Endothelial cell of umbilical vein (primary cell): ENCODE measurements at regions of chr1 and their contacts with region 1.

Region 1: GRCh38 chr1:23539698-23540266 is 8.7 kb upstream of the E2F2 start:
- DNase-seq: peak; percentile 93
- H3K4me3 ChIP-seq: no peak overlapping the region
- H3K27ac ChIP-seq: no peak overlapping the region
- H3K4me1 ChIP-seq: peaks cover 8% of the 10 kb centered on the region
- H3K27me3 ChIP-seq: no peaks in the 10 kb centered on the region
- CTCF ChIP-seq: peak; percentile 93
- POLR2A ChIP-seq: no peak

Region 2: GRCh38 chr1:22976461-22977243 is 563.1 kb before region 1 on chr1:
- CTCF ChIA-PET with region 1: interaction called, 11 read pairs
- POLR2A ChIA-PET with region 1: no interaction called
- dilution Hi-C with region 1: no loop called
- intact Hi-C with region 1: loop called (anchors 1 kb)
- DNase-seq: peak; percentile 83
- H3K4me3 ChIP-seq: no peak overlapping the region
- H3K27ac ChIP-seq: no peak overlapping the region
- H3K4me1 ChIP-seq: peaks cover 12% of the 10 kb centered on the region
- H3K27me3 ChIP-seq: no peaks in the 10 kb centered on the region
- CTCF ChIP-seq: peak; percentile 81 to 87
- POLR2A ChIP-seq: no peak

Region 3: DNA sequence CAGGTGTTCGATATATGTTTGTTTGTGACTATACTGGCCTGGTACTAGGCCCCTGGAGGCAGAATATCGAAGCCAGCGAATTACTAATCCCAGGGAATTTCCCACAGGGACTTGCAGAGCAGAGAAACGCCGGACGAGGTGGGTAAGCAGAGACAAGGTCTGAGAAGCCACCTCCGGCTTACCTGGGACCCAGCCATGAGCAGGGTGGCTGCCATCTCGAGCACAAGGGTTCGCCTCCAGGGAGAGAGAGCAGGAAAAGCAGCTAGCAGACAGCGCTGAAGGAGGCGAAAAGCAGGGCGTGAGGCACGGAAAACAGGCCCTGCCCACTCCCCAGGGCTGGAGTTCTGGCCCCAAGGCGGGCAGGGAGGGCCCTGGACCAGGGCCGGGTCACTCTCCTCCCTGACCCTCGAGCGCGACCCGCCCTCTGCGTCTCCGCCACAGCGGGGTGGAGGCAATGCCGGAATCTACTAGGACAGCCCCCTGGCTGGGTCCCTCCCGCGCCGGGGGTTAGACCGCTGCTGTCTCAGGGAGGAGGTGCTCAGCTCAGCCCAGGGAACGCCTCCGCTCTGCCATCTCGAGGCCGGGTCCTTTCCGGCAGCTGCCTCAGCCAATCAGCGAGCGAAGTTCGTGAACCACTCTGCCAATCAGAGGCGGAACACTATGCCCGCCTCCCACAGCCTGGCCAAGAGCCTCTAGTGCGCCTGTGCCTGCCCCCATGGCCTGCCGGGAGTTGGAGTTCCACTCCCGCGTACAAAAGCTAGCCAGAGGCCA is 171.8 kb before region 1 on chr1:
- CTCF ChIA-PET with region 1: interaction called, 6 read pairs
- POLR2A ChIA-PET with region 1: no interaction called
- dilution Hi-C with region 1: no loop called
- intact Hi-C with region 1: loop called (anchors 1 kb)
- DNase-seq: peak; percentile 99
- H3K4me3 ChIP-seq: peak overlapping the region; percentile 47 to 93 (median 70)
- H3K27ac ChIP-seq: peak overlapping the region; percentile 82
- H3K4me1 ChIP-seq: peaks cover 32% of the 10 kb centered on the region
- H3K27me3 ChIP-seq: no peaks in the 10 kb centered on the region
- CTCF ChIP-seq: no peak
- POLR2A ChIP-seq: no peak

Region 4: DNA sequence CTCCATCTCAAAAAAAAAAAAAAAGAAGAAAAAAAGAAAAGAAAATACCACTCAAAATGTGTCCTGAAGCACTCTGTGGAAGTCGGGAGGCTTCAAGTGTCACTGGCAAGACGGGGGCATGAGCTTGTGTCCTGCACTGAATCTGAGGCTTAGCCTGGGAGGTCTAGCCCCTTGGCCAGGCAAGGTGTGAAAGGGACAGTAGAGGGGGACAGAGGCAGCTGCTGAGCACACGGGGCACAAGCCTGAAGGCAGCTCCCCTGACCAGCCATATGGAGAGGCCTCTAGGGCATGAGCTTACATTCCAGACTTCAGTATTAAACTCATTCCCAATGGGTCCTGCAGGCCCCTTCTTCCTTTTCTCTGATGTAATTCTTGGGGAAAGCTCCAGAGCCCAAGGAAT is 32.3 kb before region 1 on chr1:
- CTCF ChIA-PET with region 1: interaction called, 192 read pairs
- POLR2A ChIA-PET with region 1: no interaction called
- dilution Hi-C with region 1: no loop called
- intact Hi-C with region 1: no loop called
- DNase-seq: no peak
- H3K4me3 ChIP-seq: no peak overlapping the region
- H3K27ac ChIP-seq: no peak overlapping the region
- H3K4me1 ChIP-seq: no peaks in the 10 kb centered on the region
- H3K27me3 ChIP-seq: no peaks in the 10 kb centered on the region
- CTCF ChIP-seq: no peak
- POLR2A ChIP-seq: no peak

Region 5: DNA sequence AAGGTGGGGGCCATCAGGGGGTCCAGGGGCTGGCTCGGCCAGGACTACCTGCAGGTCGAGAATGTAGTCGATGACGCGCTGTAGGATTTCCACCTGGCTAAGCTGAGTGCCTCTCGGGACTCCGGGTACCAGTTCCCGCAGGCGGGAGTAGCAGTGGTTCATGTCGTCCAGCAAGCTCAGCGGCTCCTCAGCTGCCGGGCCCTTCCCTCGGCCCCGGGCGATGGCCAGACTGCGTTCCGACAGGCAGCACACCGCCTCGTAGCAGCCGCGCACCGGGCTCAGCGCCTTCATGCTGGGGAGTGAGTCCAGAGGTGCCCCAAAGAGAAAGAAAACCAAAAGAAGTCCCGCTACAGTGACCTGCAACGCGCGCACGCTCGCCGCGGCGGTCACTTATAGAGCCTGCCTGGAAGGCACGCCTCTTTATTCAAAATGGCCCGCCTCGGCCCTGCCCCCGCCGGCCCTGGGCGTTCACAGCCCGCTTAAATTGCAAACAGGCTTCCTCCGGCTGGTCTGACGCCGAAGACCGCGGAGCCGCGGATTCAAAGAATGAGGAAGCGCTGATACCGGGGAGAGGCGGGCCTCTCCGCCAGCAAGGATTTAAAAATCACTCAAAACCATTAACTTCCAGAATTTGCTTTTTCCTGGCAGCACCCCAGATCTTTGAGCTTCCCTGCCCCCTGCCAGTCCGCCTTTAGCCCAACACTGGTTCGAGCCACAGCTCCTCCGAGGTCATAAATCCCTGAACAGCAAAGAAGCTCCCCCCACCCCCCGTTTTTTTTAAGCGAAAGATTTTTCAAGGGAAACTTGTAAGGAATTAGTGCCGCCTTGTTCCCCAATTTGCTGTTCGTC is 19.6 kb after region 1 on chr1 and contains the start of gene ID3:
- CTCF ChIA-PET with region 1: interaction called, 21 read pairs
- POLR2A ChIA-PET with region 1: interaction called, 4 read pairs
- dilution Hi-C with region 1: no loop called
- intact Hi-C with region 1: no loop called
- DNase-seq: peak; percentile 98
- H3K4me3 ChIP-seq: peak within 1 kb of the TSS; percentile 69 to 94 (median 89)
- H3K27ac ChIP-seq: peak within 1 kb of the TSS; percentile 99
- H3K4me1 ChIP-seq: peaks cover 56% of the 10 kb centered on the region
- H3K27me3 ChIP-seq: no peaks in the 10 kb centered on the region
- CTCF ChIP-seq: no peak
- POLR2A ChIP-seq: peak; percentile 100
- total RNA-seq, gene ID3: 277 and 310 TPM in 2 replicates

Region 6: DNA sequence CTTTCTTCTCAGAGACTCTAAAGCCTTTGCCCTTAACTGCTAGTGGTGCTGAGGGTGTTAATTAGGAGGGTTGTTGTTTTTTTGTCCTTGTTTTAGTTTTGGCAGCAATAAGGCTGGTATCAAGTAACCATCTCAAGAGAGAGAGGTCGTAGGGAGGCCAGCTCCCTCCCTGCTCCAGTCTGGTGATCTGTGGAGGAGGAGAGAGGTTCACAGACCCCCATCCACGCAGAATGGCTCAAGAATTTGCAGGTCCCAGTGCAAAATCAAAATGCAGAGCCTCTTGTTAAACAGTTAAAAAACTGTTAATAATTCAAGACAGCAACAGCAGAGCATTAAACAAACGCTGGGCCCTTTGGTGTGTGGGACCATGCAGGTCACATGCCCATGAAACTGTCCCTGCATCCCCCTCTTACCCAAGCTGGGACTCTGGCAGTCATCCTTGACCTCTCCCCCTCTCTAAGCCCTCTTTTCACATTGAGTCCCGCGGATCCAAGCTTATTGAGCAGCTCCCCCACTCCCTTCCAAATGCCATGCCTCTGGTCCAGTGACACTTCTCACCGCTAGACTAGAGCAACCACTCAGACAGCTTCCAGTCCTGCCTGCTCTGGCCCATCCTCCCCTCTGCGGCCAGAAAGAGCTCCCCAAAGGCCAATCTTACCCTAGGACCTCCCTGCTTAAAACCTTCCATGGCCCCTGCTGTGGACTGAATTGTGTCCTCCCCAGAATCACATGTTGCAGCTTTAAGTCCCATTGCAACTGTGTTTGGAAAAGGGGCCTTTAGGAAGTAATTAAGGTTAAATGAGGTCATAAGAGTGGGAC is 104.2 kb after region 1 on chr1:
- CTCF ChIA-PET with region 1: interaction called, 1,069 read pairs
- POLR2A ChIA-PET with region 1: interaction called, 3 read pairs
- dilution Hi-C with region 1: no loop called
- intact Hi-C with region 1: no loop called
- DNase-seq: no peak
- H3K4me3 ChIP-seq: no peak overlapping the region
- H3K27ac ChIP-seq: no peak overlapping the region
- H3K4me1 ChIP-seq: no peaks in the 10 kb centered on the region
- H3K27me3 ChIP-seq: peaks cover 6 to 10% of the 10 kb centered on the region in 2 experiments
- CTCF ChIP-seq: no peak
- POLR2A ChIP-seq: no peak

Region 7: GRCh38 chr1:23751050-23751814 is 211.4 kb after region 1 on chr1:
- CTCF ChIA-PET with region 1: interaction called, 3 read pairs
- POLR2A ChIA-PET with region 1: no interaction called
- dilution Hi-C with region 1: no loop called
- intact Hi-C with region 1: loop called (anchors 1 kb)
- DNase-seq: peak; percentile 46
- H3K4me3 ChIP-seq: no peak overlapping the region
- H3K27ac ChIP-seq: no peak overlapping the region
- H3K4me1 ChIP-seq: no peaks in the 10 kb centered on the region
- H3K27me3 ChIP-seq: no peaks in the 10 kb centered on the region
- CTCF ChIP-seq: peak; percentile 63 to 80
- POLR2A ChIP-seq: no peak